ENCODE measurements at regions of chr6 and their contacts with region 1.

Region 1: GRCh38 chr6:125888989-125889656 is 67.4 kb upstream of the HINT3 start:
- DNase-seq: peak; percentile 29
- ATAC-seq: no peak
- H3K4me3 Mint-ChIP-seq: no peak overlapping the region
- H3K27ac Mint-ChIP-seq: no peak overlapping the region
- H3K4me1 Mint-ChIP-seq: no peaks in the 10 kb centered on the region
- H3K27me3 Mint-ChIP-seq: no peaks in the 10 kb centered on the region
- CTCF ChIP-seq: peak; percentile 65

Region 2: GRCh38 chr6:125839471-125839870 is 49.7 kb before region 1 on chr6:
- CTCF ChIA-PET with region 1: no interaction called
- POLR2A ChIA-PET with region 1: no interaction called
- intact Hi-C with region 1: no loop called
- DNase-seq: no peak
- ATAC-seq: no peak
- H3K4me3 Mint-ChIP-seq: no peak overlapping the region
- H3K27ac Mint-ChIP-seq: no peak overlapping the region
- H3K4me1 Mint-ChIP-seq: peaks cover 16% of the 10 kb centered on the region
- H3K27me3 Mint-ChIP-seq: no peaks in the 10 kb centered on the region
- CTCF ChIP-seq: no peak

Region 3: DNA sequence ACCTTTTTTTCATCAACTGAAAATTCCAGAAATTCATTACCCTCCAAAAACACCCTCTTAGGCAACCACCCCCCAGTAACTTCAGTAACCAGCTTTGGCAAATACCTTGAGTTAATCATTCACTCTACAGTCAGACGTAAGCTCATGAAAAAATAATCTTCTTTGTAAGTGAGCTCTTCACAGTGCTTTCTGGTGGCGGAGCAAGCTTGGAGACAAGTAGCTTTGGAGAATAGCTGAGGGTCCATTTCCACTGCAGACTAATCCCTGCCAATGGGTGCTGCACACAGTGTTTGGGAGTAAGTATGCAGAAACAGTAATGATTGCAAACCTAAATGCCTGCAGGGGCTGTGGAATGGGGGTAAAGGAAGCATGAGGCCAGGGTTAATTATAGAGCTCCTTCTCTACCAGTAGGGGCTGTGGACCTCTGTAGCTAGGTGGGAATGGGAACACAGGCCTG is 10.6 kb after region 1 on chr6:
- CTCF ChIA-PET with region 1: interaction called, 29 read pairs
- POLR2A ChIA-PET with region 1: interaction called, 3 read pairs
- intact Hi-C with region 1: no loop called
- DNase-seq: no peak
- ATAC-seq: no peak
- H3K4me3 Mint-ChIP-seq: no peak overlapping the region
- H3K27ac Mint-ChIP-seq: no peak overlapping the region
- H3K4me1 Mint-ChIP-seq: peaks cover 11% of the 10 kb centered on the region
- H3K27me3 Mint-ChIP-seq: no peaks in the 10 kb centered on the region
- CTCF ChIP-seq: no peak

Region 4: DNA sequence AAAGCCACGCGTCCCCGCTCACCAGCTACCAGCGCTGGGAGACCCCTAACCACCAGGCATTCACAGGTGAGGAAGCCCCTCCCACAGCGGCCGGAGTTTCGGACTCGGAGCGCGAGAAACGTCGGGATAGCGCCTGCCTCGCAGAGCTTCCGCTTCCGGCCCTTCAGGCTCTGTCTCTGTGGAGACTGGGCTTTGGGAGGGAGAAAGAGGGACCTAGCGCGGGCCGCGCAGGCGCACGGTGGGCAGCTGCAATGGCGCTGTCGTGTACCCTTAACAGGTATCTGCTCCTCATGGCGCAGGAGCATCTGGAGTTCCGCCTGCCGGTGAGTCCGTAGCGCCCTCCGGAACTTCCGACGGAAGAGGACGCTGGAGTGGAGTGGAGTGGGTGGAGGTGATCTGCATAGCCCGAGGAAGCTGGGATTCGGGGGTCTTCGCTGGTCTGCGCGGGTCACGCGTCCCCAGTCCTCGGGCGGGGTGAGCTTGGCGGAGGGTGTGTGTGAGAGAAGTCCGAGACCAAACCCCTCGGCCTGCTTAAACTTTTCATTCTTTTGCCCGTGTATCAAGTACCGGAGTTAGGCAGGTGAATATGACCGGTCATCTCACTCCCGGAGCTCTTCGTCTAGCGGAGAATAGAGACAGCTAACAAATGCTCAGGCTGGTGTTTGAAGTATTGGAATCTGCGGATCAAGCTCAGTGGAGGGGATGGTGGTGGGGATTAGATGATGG is 97.3 kb after region 1 on chr6 and contains the start of gene TRMT11:
- CTCF ChIA-PET with region 1: no interaction called
- POLR2A ChIA-PET with region 1: no interaction called
- intact Hi-C with region 1: no loop called
- DNase-seq: peak; percentile 87
- ATAC-seq: peak; percentile 96
- H3K4me3 Mint-ChIP-seq: no peak within 1 kb of the TSS
- H3K27ac Mint-ChIP-seq: peak within 1 kb of the TSS; percentile 21
- H3K4me1 Mint-ChIP-seq: peaks cover 20% of the 10 kb centered on the region
- H3K27me3 Mint-ChIP-seq: no peaks in the 10 kb centered on the region
- CTCF ChIP-seq: no peak
- total RNA-seq, gene TRMT11: 41.5 to 49.1 TPM